ENCODE measurements at regions of chr14 and their contacts with region 1.

Region 1: DNA sequence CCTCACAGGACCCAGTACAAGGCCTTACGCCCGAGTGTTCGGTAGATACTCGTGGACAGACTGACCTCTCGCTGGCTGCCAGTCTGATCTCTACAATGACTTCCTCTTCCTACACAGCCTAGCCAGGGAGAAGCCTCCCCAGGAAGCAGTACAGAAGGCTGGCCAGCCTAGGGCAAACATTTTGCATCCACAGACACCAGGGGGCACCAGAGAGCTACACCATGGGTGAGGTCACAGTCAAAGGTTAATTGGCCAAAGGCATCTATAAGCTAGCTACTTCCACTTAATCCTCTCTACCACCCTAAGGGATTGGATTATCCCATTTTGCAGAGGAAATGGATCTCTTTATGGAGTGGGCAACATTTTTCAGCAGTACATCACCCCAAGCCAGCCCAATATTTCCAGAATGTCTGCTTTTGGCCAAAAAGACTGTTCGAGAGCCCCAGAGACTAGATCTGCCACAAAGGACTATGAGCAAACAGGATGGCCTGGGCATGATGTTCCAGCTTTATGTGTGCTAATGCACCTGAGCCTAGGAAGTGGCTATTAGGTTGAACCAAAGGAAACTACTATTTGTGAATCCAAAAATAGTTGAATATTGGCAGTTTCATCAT is 14.6 kb upstream of the PNMA1 start:
- DNase-seq: peak; percentile 93
- H3K4me3 Mint-ChIP-seq: no peak overlapping the region
- H3K27ac Mint-ChIP-seq: peak overlapping the region; percentile 68
- H3K4me1 Mint-ChIP-seq: peaks cover 39% of the 10 kb centered on the region
- H3K27me3 Mint-ChIP-seq: no peaks in the 10 kb centered on the region

Region 2: GRCh38 chr14:73162251-73162650 is 566.6 kb before region 1 on chr14:
- CTCF ChIA-PET with region 1: no interaction called
- DNase-seq: no peak
- H3K4me3 Mint-ChIP-seq: no peak overlapping the region
- H3K27ac Mint-ChIP-seq: no peak overlapping the region
- H3K4me1 Mint-ChIP-seq: peaks cover 2% of the 10 kb centered on the region
- H3K27me3 Mint-ChIP-seq: no peaks in the 10 kb centered on the region

Region 3: GRCh38 chr14:73717711-73718417 is 11.0 kb before region 1 on chr14:
- CTCF ChIA-PET with region 1: interaction called, 23 read pairs
- DNase-seq: no peak
- H3K4me3 Mint-ChIP-seq: no peak overlapping the region
- H3K27ac Mint-ChIP-seq: no peak overlapping the region
- H3K4me1 Mint-ChIP-seq: peaks cover 18% of the 10 kb centered on the region
- H3K27me3 Mint-ChIP-seq: no peaks in the 10 kb centered on the region

Region 4: GRCh38 chr14:73753959-73754882 is 25.4 kb after region 1 on chr14:
- CTCF ChIA-PET with region 1: interaction called, 88 read pairs
- DNase-seq: peak; percentile 67
- H3K4me3 Mint-ChIP-seq: peak overlapping the region; percentile 90
- H3K27ac Mint-ChIP-seq: peak overlapping the region; percentile 96
- H3K4me1 Mint-ChIP-seq: peaks cover 90% of the 10 kb centered on the region
- H3K27me3 Mint-ChIP-seq: no peaks in the 10 kb centered on the region

Region 5: GRCh38 chr14:73785873-73786695 is 57.3 kb after region 1 on chr14:
- CTCF ChIA-PET with region 1: interaction called, 10 read pairs
- DNase-seq: peak; percentile 83
- H3K4me3 Mint-ChIP-seq: peak overlapping the region; percentile 91
- H3K27ac Mint-ChIP-seq: peak overlapping the region; percentile 96
- H3K4me1 Mint-ChIP-seq: peaks cover 61% of the 10 kb centered on the region
- H3K27me3 Mint-ChIP-seq: no peaks in the 10 kb centered on the region

Region 6: DNA sequence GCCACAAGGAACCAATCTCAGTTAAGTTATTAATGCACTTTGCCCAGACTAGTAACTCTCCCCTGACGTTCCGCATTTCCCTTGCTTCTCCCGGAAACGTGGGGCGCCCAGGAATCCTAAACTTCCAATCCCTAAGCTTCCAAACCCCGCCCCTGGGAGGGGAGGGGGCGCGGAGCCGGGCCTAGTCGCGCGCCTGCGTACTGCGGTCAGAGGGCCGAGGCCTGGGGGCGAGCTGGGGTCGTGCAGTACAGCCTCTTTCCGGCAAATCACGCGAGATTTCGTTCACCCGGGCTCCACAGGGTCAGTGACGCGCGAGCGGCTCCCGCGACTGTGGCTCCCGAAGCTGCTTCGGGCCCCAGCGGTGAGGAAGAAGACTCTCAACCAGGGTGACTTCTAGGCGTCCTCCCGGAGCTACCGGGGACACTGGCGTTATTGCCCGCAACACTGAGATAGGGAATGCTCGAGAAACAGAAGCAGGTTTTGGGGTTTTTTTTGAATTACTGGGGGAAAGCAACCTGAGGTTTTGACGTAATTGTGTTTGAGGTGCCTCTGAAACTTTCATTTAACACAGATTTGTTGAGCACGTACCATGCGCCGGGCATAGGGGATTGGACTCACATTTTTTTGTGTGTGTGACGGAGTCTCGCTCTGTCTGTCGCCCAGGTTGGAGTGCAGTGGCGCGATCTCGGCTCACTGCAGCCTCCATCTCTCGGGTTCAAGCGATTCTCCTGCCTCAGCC is 123.0 kb after region 1 on chr14 and contains the start of gene PTGR2:
- CTCF ChIA-PET with region 1: interaction called, 11 read pairs
- DNase-seq: peak; percentile 94
- H3K4me3 Mint-ChIP-seq: peak within 1 kb of the TSS; percentile 83
- H3K27ac Mint-ChIP-seq: peak within 1 kb of the TSS; percentile 92
- H3K4me1 Mint-ChIP-seq: peaks cover 24% of the 10 kb centered on the region
- H3K27me3 Mint-ChIP-seq: peaks cover 18% of the 10 kb centered on the region

Measured in activated naive CD4-positive, alpha-beta T cell treated with anti-CD3 and anti-CD28 coated beads, Interleukin-2, amount 10 ng/mL, durations not matched to agents 7 days and 5 days (primary cell).